Prostate gland (tissue), 2 donors: ENCODE measurements at regions of chr5 and their contacts with region 1.

Region 1: DNA sequence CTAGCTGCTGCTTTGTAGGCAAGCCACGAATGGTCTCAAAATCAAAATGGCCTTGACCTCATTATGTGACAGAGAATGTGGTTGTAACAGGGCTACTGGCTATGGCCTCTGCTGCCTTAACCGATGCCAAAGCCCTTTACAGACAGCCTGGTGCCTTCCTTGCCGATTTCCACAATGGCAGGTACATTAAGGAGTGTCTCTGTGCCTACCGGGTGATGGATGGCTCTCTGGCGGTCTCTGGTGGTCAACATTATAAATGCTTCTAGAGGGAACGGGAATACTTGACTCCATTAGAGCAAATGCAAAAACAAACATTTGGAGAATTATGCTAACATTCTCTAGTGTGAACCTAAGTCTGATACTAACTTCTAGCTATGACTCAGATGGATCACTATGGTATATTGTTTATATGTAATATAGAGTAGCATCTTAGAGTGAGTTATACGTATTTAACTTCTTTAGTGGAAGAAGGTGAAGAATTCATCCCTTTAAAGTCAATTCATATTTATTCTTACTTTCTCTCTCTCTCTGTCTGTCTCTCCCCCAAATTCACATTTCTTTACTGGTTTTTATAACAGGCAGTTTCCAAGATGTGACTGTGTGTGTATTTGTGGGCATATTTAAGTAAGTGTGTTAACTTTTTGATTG is 52.5 kb downstream of the RPS23 start:
- DNase-seq: peak; percentile 48
- H3K4me3 ChIP-seq: no peak overlapping the region
- H3K27ac ChIP-seq: no peak overlapping the region
- H3K4me1 ChIP-seq: no peaks in the 10 kb centered on the region
- H3K27me3 ChIP-seq: no peaks in the 10 kb centered on the region
- CTCF ChIP-seq: peak; percentile 58 to 75 (median 70)
- POLR2A ChIP-seq: no peak

Region 2: DNA sequence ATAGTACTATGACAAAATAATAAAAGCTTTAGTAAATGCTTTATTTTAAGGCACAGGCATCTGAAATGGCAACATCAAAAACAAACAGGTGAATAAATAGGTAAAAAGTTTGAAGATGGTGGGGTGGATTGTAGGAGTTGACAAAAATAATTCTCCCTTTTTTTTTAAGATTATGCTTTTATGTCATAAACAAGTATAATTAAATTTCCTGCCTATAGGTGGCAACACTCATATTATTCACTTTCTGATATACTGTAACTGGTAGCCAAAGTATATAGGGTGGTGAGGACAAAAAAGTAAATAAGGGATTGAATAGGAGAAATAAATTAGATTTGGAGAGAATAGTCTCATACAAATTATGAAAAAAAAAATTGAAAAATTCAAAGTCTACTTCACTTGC is 711.7 kb before region 1 on chr5:
- intact Hi-C with region 1: loop called (anchors 10 kb)
- DNase-seq: no peak
- H3K4me3 ChIP-seq: no peak overlapping the region
- H3K27ac ChIP-seq: no peak overlapping the region
- H3K4me1 ChIP-seq: no peaks in the 10 kb centered on the region
- H3K27me3 ChIP-seq: no peaks in the 10 kb centered on the region
- CTCF ChIP-seq: peak in 1 of 4 experiments; percentile 11
- POLR2A ChIP-seq: no peak